ENCODE measurements at regions of chr4 and their contacts with region 1.

Region 1: GRCh38 chr4:146522098-146522868 is 543 bp upstream of the SLC10A7 start:
- H3K4me3 Mint-ChIP-seq: no peak overlapping the region
- H3K27ac Mint-ChIP-seq: no peak overlapping the region
- H3K4me1 Mint-ChIP-seq: peaks cover 5% of the 10 kb centered on the region
- H3K27me3 Mint-ChIP-seq: no peaks in the 10 kb centered on the region

Region 2: DNA sequence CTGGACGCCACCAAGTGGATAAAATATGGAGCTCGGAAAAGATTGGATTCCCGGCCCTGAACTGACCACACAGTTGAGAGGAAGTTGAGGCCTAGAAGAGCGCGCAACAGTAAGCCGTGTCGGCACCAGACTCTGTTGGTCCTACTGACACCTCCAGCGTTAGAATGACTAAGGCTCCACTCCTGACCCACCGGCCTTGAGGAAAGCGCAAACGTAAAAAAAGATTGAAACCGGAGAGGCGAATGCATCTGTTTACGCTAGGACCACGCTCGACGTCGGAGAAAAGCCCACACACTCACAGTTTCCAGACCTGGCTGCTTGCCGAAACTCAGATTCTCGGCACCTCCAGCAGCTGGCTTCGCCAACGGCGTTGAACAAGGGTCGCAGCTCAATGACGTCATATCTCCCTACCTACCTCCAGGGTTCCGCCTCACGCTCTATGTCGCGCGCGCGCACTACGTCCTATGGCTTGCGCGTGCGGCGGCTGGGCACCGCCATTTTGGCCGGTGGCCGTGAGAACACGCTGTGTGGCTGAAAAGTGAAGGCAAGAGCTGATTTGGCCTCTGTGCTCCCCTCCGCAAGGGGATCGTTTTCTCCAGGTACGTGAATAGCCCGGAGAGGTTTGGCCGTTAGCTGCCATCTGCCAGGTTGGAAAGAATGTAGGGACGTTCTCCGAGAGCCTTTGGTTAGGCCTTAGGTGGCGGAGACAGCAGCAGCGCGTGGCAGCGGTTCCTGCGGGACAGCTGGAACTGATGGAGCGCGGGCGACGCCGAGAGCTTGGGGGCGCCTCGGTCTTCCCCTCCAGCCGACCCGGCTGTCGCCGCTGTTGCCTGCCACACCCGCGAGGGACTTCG is 1424.2 kb before region 1 on chr4 and contains the starts of genes ABCE1 and ANAPC10:
- intact Hi-C with region 1: loop called (anchors 10 kb)
- H3K4me3 Mint-ChIP-seq: peak within 1 kb of the TSS; percentile 93
- H3K27ac Mint-ChIP-seq: peak within 1 kb of the TSS; percentile 99
- H3K4me1 Mint-ChIP-seq: peaks cover 25% of the 10 kb centered on the region
- H3K27me3 Mint-ChIP-seq: no peaks in the 10 kb centered on the region

Region 3: GRCh38 chr4:145618932-145619638 is 903.2 kb before region 1 on chr4 and contains the start of gene MMAA:
- intact Hi-C with region 1: loop called (anchors 5 kb)
- H3K4me3 Mint-ChIP-seq: peak within 1 kb of the TSS; percentile 97
- H3K27ac Mint-ChIP-seq: peak within 1 kb of the TSS; percentile 99
- H3K4me1 Mint-ChIP-seq: peaks cover 21% of the 10 kb centered on the region
- H3K27me3 Mint-ChIP-seq: no peaks in the 10 kb centered on the region

Region 4: DNA sequence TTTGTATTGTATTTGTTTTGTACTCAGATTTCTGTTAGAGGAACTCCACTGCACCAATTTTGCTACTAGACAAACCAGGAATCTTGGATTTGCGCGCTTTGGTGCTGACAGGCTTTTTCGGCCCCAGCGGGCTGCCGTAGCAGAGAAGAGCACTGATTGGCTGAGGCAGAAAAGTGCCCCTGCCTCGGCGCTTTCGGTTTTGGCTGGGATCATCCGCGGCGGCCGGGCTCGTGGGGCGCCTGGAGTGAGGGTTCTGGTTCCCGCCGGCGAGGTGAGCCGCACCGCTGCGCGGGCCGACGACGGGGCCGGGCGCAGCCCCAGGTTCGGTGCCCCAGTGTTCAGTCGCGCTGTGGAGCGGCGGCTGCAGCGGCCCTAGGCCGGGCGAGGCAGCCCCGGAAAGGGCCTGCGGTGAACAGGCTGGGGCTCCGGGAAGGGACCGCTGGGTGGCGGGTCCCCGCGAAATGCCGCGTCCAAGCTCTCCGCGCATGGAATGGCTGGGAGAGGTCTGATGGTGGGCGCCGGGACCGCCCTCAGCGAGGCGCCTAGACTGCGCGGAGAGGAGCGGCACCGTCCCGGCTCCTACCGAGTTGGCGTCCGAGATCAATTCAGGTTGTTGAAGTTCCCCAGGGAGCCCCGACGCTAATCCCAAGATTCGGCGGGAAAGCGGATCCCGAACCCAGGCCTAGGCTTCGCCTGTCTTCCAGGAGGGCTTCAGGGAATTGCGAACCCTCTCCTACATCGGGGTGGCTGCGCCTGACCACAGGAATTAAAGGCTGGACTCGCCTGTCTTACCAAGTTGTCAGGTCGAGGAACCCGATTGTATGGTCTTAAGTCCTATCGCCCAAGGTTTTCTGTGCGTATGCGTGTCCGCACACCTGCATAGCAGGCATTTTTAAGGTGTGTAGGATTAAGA is 346.5 kb before region 1 on chr4 and contains the start of gene LSM6:
- intact Hi-C with region 1: loop called (anchors 10 kb)
- H3K4me3 Mint-ChIP-seq: peak within 1 kb of the TSS; percentile 88
- H3K27ac Mint-ChIP-seq: peak within 1 kb of the TSS; percentile 90
- H3K4me1 Mint-ChIP-seq: peaks cover 38% of the 10 kb centered on the region
- H3K27me3 Mint-ChIP-seq: no peaks in the 10 kb centered on the region

Region 5: DNA sequence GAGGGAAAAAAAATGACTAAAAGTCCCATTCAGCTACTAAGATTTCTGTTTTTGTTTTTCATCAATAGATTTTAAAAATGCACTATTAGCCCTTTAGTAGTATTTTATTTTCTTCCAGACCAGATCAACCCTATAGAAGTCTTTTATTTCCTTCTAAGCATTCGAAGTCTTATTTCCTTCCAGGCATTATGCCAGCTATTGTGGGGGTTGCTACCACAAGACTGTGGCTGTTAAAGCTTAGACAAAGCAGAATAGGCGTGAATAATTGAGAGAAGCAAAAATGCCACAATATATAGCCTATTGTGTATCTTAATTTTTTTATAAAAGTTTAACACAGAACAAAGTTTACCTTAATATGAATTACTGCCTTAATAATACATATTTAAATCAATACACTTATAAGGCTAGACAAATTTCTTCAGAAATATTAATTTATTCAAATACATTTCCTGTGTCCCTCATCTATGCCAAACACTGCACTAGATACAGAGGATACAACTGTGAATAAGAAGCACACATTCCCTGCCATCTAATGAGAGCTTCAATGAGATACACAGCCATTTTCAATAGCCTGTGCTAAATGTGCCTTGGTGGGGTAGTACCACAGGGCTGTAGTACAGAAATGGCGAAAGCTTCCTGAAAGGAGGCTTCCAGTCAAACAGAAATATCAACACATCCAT is 33.6 kb before region 1 on chr4:
- intact Hi-C with region 1: loop called (anchors 1 kb)
- H3K4me3 Mint-ChIP-seq: no peak overlapping the region
- H3K27ac Mint-ChIP-seq: no peak overlapping the region
- H3K4me1 Mint-ChIP-seq: no peaks in the 10 kb centered on the region
- H3K27me3 Mint-ChIP-seq: no peaks in the 10 kb centered on the region

Region 6: GRCh38 chr4:146945556-146946374 is 423.5 kb after region 1 on chr4 and contains the start of gene TTC29:
- intact Hi-C with region 1: loop called (anchors 10 kb)
- H3K4me3 Mint-ChIP-seq: peak within 1 kb of the TSS; percentile 81
- H3K27ac Mint-ChIP-seq: no peak within 1 kb of the TSS
- H3K4me1 Mint-ChIP-seq: peaks cover 23% of the 10 kb centered on the region
- H3K27me3 Mint-ChIP-seq: peaks cover 18% of the 10 kb centered on the region